PC-3 (cell line): ENCODE measurements at regions of chr2 and their contacts with region 1.

Region 1: DNA sequence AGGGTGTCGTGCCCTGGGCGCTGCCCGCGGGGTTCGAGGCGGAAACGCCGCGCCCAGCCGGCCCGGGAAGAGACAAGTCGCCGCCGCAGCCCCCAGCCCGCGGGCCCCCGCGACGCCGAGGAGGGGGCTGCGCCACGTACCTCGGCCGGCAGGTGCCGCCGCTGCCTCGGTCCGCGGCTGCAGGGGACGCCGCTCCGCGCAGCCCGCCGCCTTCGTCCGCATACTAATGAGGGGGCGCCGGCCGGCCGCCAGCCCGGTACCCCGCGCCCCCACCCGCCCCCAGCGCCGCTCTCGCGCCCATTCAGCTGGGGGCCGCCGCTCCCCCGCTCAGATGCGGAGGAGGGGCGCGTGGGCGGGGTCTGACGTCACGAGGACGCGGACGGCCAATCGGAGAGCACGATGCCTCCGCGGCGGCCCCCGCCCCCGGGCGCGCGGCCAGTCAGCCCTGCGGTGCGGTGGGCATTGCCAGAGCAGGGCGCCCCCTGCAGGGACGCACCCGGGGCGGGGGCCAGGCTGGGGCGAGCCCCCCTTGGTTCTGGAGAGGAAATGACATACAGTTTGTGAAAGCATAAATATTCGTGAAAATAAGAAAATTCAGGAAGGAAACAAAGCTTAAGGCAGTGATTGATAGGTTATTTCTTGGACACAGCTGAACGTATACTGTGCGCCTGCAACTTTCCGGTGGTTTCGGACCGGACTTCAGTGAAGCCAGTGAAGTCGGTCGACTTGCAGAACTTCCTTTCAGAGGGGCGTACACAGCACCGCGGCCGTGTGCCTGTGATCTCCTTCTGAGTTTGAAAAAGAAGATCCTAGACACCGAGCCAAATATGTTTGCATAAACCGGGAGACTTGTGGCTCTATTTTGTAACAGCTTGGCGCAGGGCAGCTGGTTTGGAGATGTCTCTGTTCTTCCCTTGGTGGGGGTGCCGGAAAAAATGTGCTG is at the start of gene ST3GAL5:
- DNase-seq: peak; percentile 82
- ATAC-seq: peak; percentile 65
- H3K4me3 ChIP-seq: peak within 1 kb of the TSS; percentile 84
- H3K27ac ChIP-seq: no peak within 1 kb of the TSS
- H3K4me1 ChIP-seq: peaks cover 33% of the 10 kb centered on the region
- H3K27me3 ChIP-seq: no peaks in the 10 kb centered on the region
- CTCF ChIP-seq: peak; percentile 86
- total RNA-seq, gene ST3GAL5: 0.87 and 0.98 TPM in 2 replicates

Region 2: DNA sequence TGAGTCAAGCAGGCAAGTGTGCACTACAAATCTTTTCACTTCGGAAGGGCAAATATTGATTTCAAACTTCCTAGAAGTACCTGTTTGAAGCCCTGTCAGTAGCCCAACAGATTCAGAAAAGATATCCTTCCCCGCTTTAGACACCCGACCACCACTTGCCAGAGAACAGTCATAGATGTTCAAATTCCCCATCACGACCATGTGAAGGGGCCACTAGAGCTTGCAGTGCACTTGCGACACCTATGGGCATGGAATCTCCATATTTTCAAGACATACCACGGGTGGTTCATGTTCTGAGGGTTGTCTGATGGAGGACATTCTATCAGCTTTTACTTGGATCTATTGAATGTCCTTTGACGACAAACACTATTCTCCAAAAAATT is 171.0 kb before region 1 on chr2:
- CTCF ChIA-PET with region 1: interaction called, 12 read pairs
- POLR2A ChIA-PET with region 1: no interaction called
- intact Hi-C with region 1: no loop called
- DNase-seq: peak; percentile 43
- ATAC-seq: peak; percentile 59
- H3K4me3 ChIP-seq: no peak overlapping the region
- H3K27ac ChIP-seq: no peak overlapping the region
- H3K4me1 ChIP-seq: peaks cover 7% of the 10 kb centered on the region; the same call in 1 of the 2 replicates
- H3K27me3 ChIP-seq: no peaks in the 10 kb centered on the region
- CTCF ChIP-seq: peak; percentile 60

Region 3: GRCh38 chr2:85826990-85827878 is 61.7 kb before region 1 on chr2:
- CTCF ChIA-PET with region 1: interaction called, 9 read pairs
- POLR2A ChIA-PET with region 1: no interaction called
- intact Hi-C with region 1: loop called (anchors 2 kb)
- DNase-seq: peak; percentile 73
- ATAC-seq: peak; percentile 97
- H3K4me3 ChIP-seq: peak overlapping the region; percentile 59
- H3K27ac ChIP-seq: no peak overlapping the region
- H3K4me1 ChIP-seq: no peaks in the 10 kb centered on the region
- H3K27me3 ChIP-seq: peaks cover 4% of the 10 kb centered on the region; the same call in 1 of the 2 replicates
- CTCF ChIP-seq: peak; percentile 90

Region 4: DNA sequence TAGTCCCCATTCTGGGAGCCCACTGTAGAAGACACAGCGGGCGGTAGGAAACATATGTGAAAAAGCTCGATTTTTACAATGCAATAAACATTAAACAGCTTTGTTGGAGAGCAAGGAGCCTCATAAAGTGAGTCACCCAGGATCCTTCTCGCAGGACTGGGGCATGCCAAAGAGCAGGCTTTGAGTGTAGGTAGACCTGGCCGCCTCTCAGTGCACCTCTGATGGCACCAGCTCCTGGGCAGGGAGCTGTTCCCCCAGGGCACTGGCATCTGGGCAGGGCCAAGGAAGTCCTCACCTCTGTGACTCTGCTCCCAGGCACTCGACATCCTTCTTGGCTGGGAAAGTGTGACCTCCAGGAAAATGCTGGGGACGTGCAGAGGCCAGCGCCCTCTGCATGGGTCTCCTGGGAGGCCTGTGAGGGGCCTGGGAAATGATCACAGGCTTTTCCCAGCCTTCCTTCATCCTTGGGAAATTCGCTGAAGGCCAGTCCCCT is 122.5 kb after region 1 on chr2:
- CTCF ChIA-PET with region 1: interaction called, 9 read pairs
- POLR2A ChIA-PET with region 1: no interaction called
- intact Hi-C with region 1: loop called (anchors 2 kb)
- DNase-seq: peak; percentile 78
- ATAC-seq: peak; percentile 100
- H3K4me3 ChIP-seq: no peak overlapping the region
- H3K27ac ChIP-seq: no peak overlapping the region
- H3K4me1 ChIP-seq: peaks cover 11% of the 10 kb centered on the region
- H3K27me3 ChIP-seq: no peaks in the 10 kb centered on the region
- CTCF ChIP-seq: no peak

Region 5: DNA sequence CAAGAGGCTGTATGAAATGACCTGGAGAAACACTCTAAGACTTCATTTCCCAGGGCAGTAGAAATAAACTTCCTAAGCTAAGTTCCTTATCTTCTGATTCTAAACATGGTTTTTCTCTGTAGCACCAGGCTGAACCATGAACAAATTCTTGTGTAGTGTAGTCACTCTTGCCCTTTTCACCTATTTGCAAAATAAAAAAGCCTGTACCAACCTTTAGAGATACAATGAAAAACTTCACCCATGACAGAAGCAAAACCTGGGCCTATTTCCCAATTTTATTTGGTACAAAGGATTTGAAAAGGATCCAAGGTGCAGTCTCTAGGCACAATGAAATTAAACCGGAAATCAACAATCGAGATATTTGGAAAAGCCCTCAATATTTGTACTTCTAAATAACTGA is 173.1 kb after region 1 on chr2:
- CTCF ChIA-PET with region 1: no interaction called
- POLR2A ChIA-PET with region 1: no interaction called
- intact Hi-C with region 1: loop called (anchors 5 kb)
- DNase-seq: peak; percentile 65
- ATAC-seq: peak; percentile 71
- H3K4me3 ChIP-seq: no peak overlapping the region
- H3K27ac ChIP-seq: no peak overlapping the region
- H3K4me1 ChIP-seq: peaks cover 26% of the 10 kb centered on the region
- H3K27me3 ChIP-seq: no peaks in the 10 kb centered on the region
- CTCF ChIP-seq: no peak

Region 6: GRCh38 chr2:86079981-86080911 is 191.3 kb after region 1 on chr2:
- CTCF ChIA-PET with region 1: no interaction called
- POLR2A ChIA-PET with region 1: no interaction called
- intact Hi-C with region 1: loop called (anchors 5 kb)
- DNase-seq: peak; percentile 52
- ATAC-seq: peak; percentile 89
- H3K4me3 ChIP-seq: no peak overlapping the region
- H3K27ac ChIP-seq: no peak overlapping the region
- H3K4me1 ChIP-seq: no peaks in the 10 kb centered on the region
- H3K27me3 ChIP-seq: no peaks in the 10 kb centered on the region
- CTCF ChIP-seq: peak; percentile 82